Endothelial cell of umbilical vein (primary cell): ENCODE measurements at regions of chr22 and their contacts with region 1.

Region 1: DNA sequence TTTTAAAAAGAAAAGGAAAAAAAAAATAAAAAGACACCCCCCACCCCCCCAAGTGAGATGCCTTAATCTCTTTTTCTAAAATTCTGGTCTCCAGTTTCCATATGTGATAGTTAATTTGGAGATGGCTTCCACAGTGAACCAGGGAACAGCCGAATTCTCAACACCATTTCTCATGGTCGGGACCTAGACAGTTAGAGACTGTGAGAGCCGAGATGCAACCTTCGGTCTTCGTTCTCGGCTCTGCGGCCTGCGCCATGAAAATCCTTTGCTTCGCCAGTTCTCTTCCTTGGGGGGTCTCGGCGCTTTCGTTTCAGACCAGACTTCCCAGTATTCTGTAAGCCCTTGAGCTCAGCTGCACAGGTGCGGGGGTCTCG is 723 bp downstream of the CACNG2 start:
- DNase-seq: no peak
- H3K4me3 ChIP-seq: no peak overlapping the region
- H3K27ac ChIP-seq: no peak overlapping the region
- H3K4me1 ChIP-seq: no peaks in the 10 kb centered on the region
- H3K27me3 ChIP-seq: peaks cover 23 to 33% of the 10 kb centered on the region in 2 experiments
- CTCF ChIP-seq: no peak
- POLR2A ChIP-seq: no peak

Region 2: DNA sequence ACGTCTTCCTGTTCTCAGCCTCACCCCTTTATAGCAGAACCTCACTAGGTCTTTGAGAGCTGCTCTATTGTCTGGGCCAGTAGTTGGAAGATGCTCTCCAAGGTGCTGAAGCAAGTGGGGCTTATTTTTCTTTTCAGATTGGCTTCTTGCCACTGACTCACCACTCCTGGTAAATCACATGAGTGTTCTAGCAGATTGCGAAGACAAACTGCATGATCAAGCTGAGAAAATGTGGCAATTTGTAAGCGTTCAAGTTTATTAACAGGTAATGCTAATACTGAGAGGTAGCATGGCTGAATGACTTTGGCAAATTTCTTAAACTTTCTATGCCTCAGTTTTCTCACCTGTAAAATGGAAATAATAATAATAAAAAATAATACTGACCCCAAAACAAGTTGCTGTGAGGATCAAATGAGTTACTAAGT is 58.5 kb before region 1 on chr22:
- CTCF ChIA-PET with region 1: interaction called, 5 read pairs
- POLR2A ChIA-PET with region 1: no interaction called
- dilution Hi-C with region 1: no loop called
- intact Hi-C with region 1: loop called (anchors 1 kb)
- DNase-seq: peak; percentile 85
- H3K4me3 ChIP-seq: no peak overlapping the region
- H3K27ac ChIP-seq: no peak overlapping the region
- H3K4me1 ChIP-seq: no peaks in the 10 kb centered on the region
- H3K27me3 ChIP-seq: no peaks in the 10 kb centered on the region
- CTCF ChIP-seq: no peak
- POLR2A ChIP-seq: no peak